ENCODE measurements at regions of chr4 and their contacts with region 1.

Region 1: GRCh38 chr4:186137196-186137794 is 32.8 kb downstream of the FAM149A start:
- DNase-seq: peak; percentile 34
- H3K4me3 Mint-ChIP-seq: no peak overlapping the region
- H3K27ac Mint-ChIP-seq: no peak overlapping the region
- H3K4me1 Mint-ChIP-seq: no peaks in the 10 kb centered on the region
- H3K27me3 Mint-ChIP-seq: no peaks in the 10 kb centered on the region
- CTCF ChIP-seq: peak; percentile 60

Region 2: GRCh38 chr4:186121057-186121456 is 16.2 kb before region 1 on chr4:
- CTCF ChIA-PET with region 1: interaction called, 12 read pairs
- POLR2A ChIA-PET with region 1: interaction called, 4 read pairs
- intact Hi-C with region 1: no loop called
- DNase-seq: no peak
- H3K4me3 Mint-ChIP-seq: no peak overlapping the region
- H3K27ac Mint-ChIP-seq: no peak overlapping the region
- H3K4me1 Mint-ChIP-seq: no peaks in the 10 kb centered on the region
- H3K27me3 Mint-ChIP-seq: no peaks in the 10 kb centered on the region
- CTCF ChIP-seq: no peak

Region 3: DNA sequence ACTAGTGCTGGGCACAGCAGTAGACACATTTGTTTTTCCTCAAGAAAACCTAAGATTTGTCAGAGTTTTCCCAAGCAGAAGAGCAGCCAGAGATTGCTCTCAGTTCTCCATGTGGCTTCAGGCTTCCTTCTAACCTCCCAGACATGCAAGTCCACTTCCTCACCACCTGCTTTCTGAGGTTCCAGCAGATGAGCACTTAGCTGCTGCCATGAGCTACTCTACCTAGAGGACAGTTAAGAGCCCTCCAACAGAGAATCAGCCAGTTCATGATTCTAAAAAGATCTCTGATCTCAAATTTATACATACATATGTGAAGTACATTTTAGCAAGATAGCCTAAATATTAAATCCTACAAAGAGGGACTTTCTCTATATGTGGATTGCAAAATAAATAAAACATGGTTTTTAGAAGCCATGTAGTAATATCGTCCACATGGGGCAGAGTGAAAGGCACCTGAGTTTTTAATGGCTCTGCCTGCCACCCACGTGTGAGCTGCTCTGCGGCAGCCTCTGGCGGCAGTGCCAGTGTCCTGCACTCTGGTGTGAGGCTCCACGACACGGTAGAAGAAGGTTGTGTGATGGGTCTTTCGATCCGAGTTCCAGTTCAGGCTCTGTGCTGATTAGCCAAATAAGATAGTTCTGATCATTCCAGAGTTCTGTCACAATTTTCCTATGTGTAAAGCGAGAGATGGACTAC is 64.4 kb after region 1 on chr4:
- CTCF ChIA-PET with region 1: no interaction called
- POLR2A ChIA-PET with region 1: no interaction called
- intact Hi-C with region 1: no loop called
- DNase-seq: peak; percentile 33
- H3K4me3 Mint-ChIP-seq: no peak overlapping the region
- H3K27ac Mint-ChIP-seq: no peak overlapping the region
- H3K4me1 Mint-ChIP-seq: no peaks in the 10 kb centered on the region
- H3K27me3 Mint-ChIP-seq: no peaks in the 10 kb centered on the region
- CTCF ChIP-seq: peak; percentile 16

Region 4: GRCh38 chr4:186266729-186267456 is 129.6 kb after region 1 on chr4:
- CTCF ChIA-PET with region 1: no interaction called
- POLR2A ChIA-PET with region 1: no interaction called
- intact Hi-C with region 1: no loop called
- DNase-seq: no peak
- H3K4me3 Mint-ChIP-seq: no peak overlapping the region
- H3K27ac Mint-ChIP-seq: no peak overlapping the region
- H3K4me1 Mint-ChIP-seq: no peaks in the 10 kb centered on the region
- H3K27me3 Mint-ChIP-seq: no peaks in the 10 kb centered on the region
- CTCF ChIP-seq: no peak

Measured in MCF 10A (cell line).